Panc1 (cell line): ENCODE measurements at regions of chr4 and their contacts with region 1.

Region 1: GRCh38 chr4:90293320-90293719 is 166.1 kb downstream of the CCSER1 start:
- DNase-seq: no peak
- ATAC-seq: no peak
- H3K4me3 ChIP-seq: no peak overlapping the region
- H3K27ac ChIP-seq: no peak overlapping the region
- H3K4me1 ChIP-seq: no peaks in the 10 kb centered on the region
- H3K27me3 ChIP-seq: no peaks in the 10 kb centered on the region
- CTCF ChIP-seq: no peak

Region 2: DNA sequence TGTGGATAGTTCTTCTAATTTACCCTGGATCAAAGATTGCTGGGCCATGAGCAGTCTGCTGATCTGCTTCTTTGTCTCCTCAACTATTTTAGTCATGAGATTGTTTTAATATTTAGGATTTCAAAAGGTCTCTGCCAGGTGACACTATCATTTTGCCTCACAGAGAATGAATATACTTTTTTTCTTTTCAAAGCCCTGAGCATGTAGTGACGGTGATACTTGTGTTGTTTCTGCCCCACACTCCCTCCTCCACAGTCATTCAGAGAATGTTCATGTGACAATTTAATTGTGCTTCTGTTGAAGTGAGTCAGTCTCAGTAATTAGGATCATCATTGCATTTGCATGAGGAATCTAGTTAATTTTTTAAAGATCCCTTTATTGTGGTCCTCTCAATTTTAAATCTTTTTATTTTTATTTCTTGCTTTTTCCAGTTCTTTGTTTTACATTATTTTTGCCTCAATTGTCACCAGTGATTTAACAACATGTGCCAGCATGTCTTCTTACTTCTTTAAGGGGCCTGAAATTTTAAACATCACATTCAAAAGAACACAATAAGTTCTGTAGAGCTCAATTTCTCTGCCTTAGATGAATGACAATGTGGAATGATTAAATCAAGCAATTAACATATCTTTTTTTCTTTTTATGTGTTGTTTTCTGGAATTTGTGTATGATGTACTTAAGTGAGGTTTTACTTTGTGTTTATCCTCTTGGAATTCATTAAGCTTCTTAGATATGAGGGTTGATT is 386.4 kb before region 1 on chr4:
- CTCF ChIA-PET with region 1: no interaction called
- POLR2A ChIA-PET with region 1: no interaction called
- in situ Hi-C with region 1: no loop called
- intact Hi-C with region 1: no loop called
- DNase-seq: no peak
- ATAC-seq: no peak
- H3K4me3 ChIP-seq: no peak overlapping the region
- H3K27ac ChIP-seq: no peak overlapping the region
- H3K4me1 ChIP-seq: no peaks in the 10 kb centered on the region
- H3K27me3 ChIP-seq: no peaks in the 10 kb centered on the region
- CTCF ChIP-seq: no peak

Region 3: GRCh38 chr4:89949782-89950387 is 343.4 kb before region 1 on chr4:
- CTCF ChIA-PET with region 1: no interaction called
- POLR2A ChIA-PET with region 1: no interaction called
- in situ Hi-C with region 1: no loop called
- intact Hi-C with region 1: loop called (anchors 10 kb)
- DNase-seq: no peak
- ATAC-seq: no peak
- H3K4me3 ChIP-seq: no peak overlapping the region
- H3K27ac ChIP-seq: no peak overlapping the region
- H3K4me1 ChIP-seq: no peaks in the 10 kb centered on the region
- H3K27me3 ChIP-seq: no peaks in the 10 kb centered on the region
- CTCF ChIP-seq: peak; percentile 43; the same call in 1 of the 2 replicates

Region 4: DNA sequence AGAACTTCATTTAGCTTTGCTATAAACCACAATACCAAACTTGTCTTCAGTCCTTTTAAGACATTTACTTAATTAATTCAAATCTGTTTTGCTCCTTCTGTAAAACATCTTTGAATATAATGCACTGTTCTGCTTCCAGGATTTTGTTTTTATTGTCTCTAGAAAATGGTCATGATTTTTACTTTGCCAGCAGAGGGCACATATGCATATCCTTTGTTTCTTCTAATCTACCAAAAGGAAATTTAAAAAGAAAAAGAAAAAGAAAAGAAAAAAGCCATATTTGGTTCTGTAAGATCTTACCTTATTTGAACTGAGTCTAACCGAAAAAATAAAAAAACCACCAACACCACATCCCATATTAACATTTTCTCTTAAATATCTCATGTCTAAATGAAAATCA is 268.1 kb before region 1 on chr4:
- CTCF ChIA-PET with region 1: no interaction called
- POLR2A ChIA-PET with region 1: no interaction called
- in situ Hi-C with region 1: no loop called
- intact Hi-C with region 1: loop called (anchors 5 kb)
- DNase-seq: no peak
- ATAC-seq: no peak
- H3K4me3 ChIP-seq: no peak overlapping the region
- H3K27ac ChIP-seq: no peak overlapping the region
- H3K4me1 ChIP-seq: no peaks in the 10 kb centered on the region
- H3K27me3 ChIP-seq: no peaks in the 10 kb centered on the region
- CTCF ChIP-seq: peak; percentile 19; the same call in 1 of the 2 replicates